ENCODE measurements at regions of chr16 and their contacts with region 1.

Region 1: GRCh38 chr16:84277237-84277823 is 17.3 kb upstream of the WFDC1 start:
- DNase-seq: peak; percentile 65 to 82 (median 74)
- H3K4me3 ChIP-seq: no peak overlapping the region
- H3K27ac ChIP-seq: no peak overlapping the region
- H3K4me1 ChIP-seq: no peaks in the 10 kb centered on the region
- H3K27me3 ChIP-seq: peaks cover 0 to 4% (median 0%) of the 10 kb centered on the region in 5 experiments

Region 2: GRCh38 chr16:84266451-84266850 is 10.9 kb before region 1 on chr16:
- CTCF ChIA-PET with region 1: interaction called, 13 read pairs
- POLR2A ChIA-PET with region 1: no interaction called
- DNase-seq: peak; percentile 31 to 71 (median 57)
- H3K4me3 ChIP-seq: no peak overlapping the region
- H3K27ac ChIP-seq: no peak overlapping the region
- H3K4me1 ChIP-seq: no peaks in the 10 kb centered on the region
- H3K27me3 ChIP-seq: peaks cover 0 to 10% (median 5%) of the 10 kb centered on the region in 5 experiments

Region 3: GRCh38 chr16:84288902-84289301 is 11.6 kb after region 1 on chr16:
- CTCF ChIA-PET with region 1: interaction called, 10 read pairs
- POLR2A ChIA-PET with region 1: no interaction called
- DNase-seq: no peak
- H3K4me3 ChIP-seq: no peak overlapping the region
- H3K27ac ChIP-seq: no peak overlapping the region
- H3K4me1 ChIP-seq: peaks cover under 1 to 10% (median 7%) of the 10 kb centered on the region in 4 experiments
- H3K27me3 ChIP-seq: peaks cover 0 to 6% (median 0%) of the 10 kb centered on the region in 5 experiments

Region 4: GRCh38 chr16:84308120-84308519 is 30.8 kb after region 1 on chr16:
- CTCF ChIA-PET with region 1: interaction called, 78 read pairs
- POLR2A ChIA-PET with region 1: no interaction called
- DNase-seq: peak; percentile 43 to 73 (median 68)
- H3K4me3 ChIP-seq: no peak overlapping the region
- H3K27ac ChIP-seq: no peak overlapping the region
- H3K4me1 ChIP-seq: peaks cover 0 to 2% (median 0%) of the 10 kb centered on the region in 4 experiments
- H3K27me3 ChIP-seq: peaks cover 2 to 32% (median 3%) of the 10 kb centered on the region in 5 experiments

Region 5: GRCh38 chr16:84484579-84485254 is 207.4 kb after region 1 on chr16:
- CTCF ChIA-PET with region 1: interaction called, 15 read pairs
- POLR2A ChIA-PET with region 1: no interaction called
- DNase-seq: peak in 2 of 3 donors; percentile 11 to 28
- H3K4me3 ChIP-seq: no peak overlapping the region
- H3K27ac ChIP-seq: no peak overlapping the region
- H3K4me1 ChIP-seq: peaks cover 0 to 17% (median 2%) of the 10 kb centered on the region in 4 experiments
- H3K27me3 ChIP-seq: no peaks in the 10 kb centered on the region

Measured in common myeloid progenitor, CD34-positive (primary cell).